GM12878 (cell line): ENCODE measurements at regions of chr3 and their contacts with region 1.

Region 1: GRCh38 chr3:150538324-150539208 is 7.7 kb downstream of the SERP1 start:
- DNase-seq: no peak
- ATAC-seq: peak; percentile 12; the same call in 2 of the 3 replicates
- H3K4me3 ChIP-seq: no peak overlapping the region
- H3K27ac ChIP-seq: no peak overlapping the region
- H3K4me1 ChIP-seq: no peaks in the 10 kb centered on the region
- H3K27me3 ChIP-seq: no peaks in the 10 kb centered on the region
- CTCF ChIP-seq: no peak
- EP300 ChIP-seq: no peak
- POLR2A ChIP-seq: peak; percentile 56; the same call in 1 of the 2 replicates
- RAD21 ChIP-seq: no peak

Region 2: GRCh38 chr3:150528354-150528797 is 10.2 kb before region 1 on chr3:
- CTCF ChIA-PET with region 1: interaction called, 16 read pairs
- POLR2A ChIA-PET with region 1: interaction called, 3 read pairs
- RAD21 ChIA-PET with region 1: interaction called, 5 read pairs
- SMC1A ChIA-PET with region 1: interaction called, 5 read pairs
- in situ Hi-C with region 1: no loop called
- intact Hi-C with region 1: no loop called
- DNase-seq: no peak
- ATAC-seq: peak; percentile 54
- H3K4me3 ChIP-seq: no peak overlapping the region
- H3K27ac ChIP-seq: no peak overlapping the region
- H3K4me1 ChIP-seq: no peaks in the 10 kb centered on the region
- H3K27me3 ChIP-seq: no peaks in the 10 kb centered on the region
- CTCF ChIP-seq: peak; percentile 13 to 48 (median 33); a peak in 4 of 6 replicates
- EP300 ChIP-seq: no peak
- POLR2A ChIP-seq: no peak
- RAD21 ChIP-seq: peak; percentile 48